ENCODE measurements at regions of chr19 and their contacts with region 1.

Region 1: DNA sequence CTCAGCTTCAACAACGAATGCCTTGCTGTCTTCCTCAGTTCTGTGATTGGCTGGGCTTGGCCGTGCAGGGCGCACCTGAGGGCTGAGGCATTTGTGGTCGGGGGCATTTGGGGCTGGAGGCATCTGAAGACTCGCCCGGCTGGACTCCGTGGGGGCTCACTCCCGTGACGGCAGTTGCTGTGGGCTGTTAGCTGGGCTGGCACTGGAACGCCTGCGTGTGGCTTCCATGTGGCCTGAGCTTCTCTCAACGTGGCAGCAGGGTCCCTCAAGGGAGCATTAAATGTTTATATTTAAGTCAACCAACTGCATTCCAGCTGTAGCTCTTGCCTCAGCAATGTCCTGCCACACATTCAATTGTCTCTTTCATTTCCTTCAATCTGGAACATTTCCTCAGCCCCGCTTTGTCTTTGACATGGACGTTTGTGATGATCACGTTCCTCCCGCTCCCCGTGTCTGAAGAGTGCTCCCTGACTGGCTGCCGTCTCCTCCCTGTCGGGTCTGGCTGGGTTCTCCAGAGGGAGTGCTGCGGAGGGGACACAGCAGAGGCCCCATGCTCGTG is 21.0 kb downstream of the CCDC8 start:
- DNase-seq: peak; percentile 58 to 80
- ATAC-seq: peak; percentile 4
- H3K4me3 ChIP-seq: no peak overlapping the region
- H3K27ac ChIP-seq: no peak overlapping the region
- H3K4me1 ChIP-seq: no peaks in the 10 kb centered on the region
- H3K27me3 ChIP-seq: no peaks in the 10 kb centered on the region

Region 2: GRCh38 chr19:46319613-46320012 is 72.7 kb before region 1 on chr19:
- intact Hi-C with region 1: no loop called
- DNase-seq: no peak
- ATAC-seq: peak; percentile 62
- H3K4me3 ChIP-seq: no peak overlapping the region
- H3K27ac ChIP-seq: peak overlapping the region in 1 of 2 donors; percentile 59
- H3K4me1 ChIP-seq: no peaks in the 10 kb centered on the region
- H3K27me3 ChIP-seq: no peaks in the 10 kb centered on the region

Region 3: DNA sequence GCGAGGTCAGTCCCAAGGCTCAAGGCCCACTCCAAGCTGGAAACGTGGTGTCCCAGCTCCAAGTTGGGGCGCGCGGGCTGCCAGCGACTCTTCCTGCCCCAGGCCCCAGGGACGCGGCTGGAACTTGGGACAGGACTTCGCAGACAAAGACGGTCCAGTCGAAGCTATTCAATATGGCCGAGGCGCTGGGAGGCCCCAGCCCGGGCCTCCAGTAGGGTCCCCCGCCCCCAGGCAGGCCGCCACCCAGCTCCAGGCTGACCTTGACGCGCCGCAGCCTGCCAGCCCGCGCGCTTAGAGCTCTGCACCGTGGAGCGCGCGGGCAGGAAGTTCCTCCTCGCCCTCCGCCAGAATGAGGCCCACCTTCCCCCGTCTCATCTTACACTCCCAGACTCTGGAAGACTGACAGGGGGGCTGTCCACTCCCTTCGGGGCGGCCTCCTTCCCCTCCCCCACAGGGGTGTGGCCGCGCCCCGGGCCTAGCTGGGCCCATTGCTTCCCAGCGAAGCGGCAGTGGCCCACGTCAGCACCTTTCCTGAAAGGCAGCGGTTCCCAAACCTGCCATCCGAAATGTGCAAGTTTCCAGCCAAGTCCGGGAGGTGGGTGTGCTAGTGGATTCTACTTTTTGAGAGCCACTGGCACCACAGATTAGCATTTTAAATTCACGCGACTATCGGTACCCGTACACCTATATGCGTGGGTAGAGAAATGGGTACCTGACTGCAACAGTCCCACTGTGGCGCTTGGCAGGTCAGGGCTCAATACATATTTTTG is 21.1 kb after region 1 on chr19 and contains the start of gene CCDC8:
- intact Hi-C with region 1: no loop called
- DNase-seq: peak; percentile 91 to 92
- ATAC-seq: peak; percentile 90
- H3K4me3 ChIP-seq: peak within 1 kb of the TSS; percentile 43
- H3K27ac ChIP-seq: peak within 1 kb of the TSS; percentile 29 to 32
- H3K4me1 ChIP-seq: no peaks in the 10 kb centered on the region
- H3K27me3 ChIP-seq: no peaks in the 10 kb centered on the region
- total RNA-seq, gene CCDC8: 18.8 to 25.7 TPM

Region 4: DNA sequence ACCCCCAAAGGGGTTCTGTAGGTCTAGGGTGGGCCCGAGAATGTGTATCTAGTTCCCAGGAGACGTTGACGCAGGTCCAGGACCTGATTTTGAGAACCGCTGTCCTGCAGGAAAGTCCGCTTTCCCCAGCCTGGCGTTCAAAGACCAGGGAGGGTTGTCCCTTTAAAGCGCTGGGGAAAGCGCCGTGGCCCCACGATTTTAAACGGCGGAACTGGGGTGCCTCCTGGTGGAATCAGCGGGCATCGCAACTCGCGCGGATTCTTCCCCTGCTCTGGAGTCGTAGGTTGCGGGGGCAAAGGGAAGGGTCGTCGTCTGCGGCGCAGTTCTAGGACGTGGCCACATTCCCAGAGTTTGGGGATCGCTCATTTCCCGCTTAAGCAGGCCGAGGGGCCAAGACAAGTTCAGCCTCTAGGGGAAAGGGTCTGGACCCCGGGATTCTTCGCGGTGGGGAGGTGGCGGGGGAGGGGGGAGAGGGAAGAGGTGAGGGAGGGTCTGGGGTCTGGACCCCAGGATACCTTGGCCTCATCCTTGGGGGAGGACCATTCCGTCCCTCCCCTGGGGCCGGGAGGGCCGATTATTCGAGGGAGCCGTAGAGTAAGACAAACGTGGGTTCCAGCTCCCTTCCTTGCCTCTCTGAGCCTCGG is 95.6 kb after region 1 on chr19:
- intact Hi-C with region 1: loop called (anchors 1 to 2 kb)
- DNase-seq: peak; percentile 83 to 95
- ATAC-seq: peak; percentile 88
- H3K4me3 ChIP-seq: peak overlapping the region; percentile 2 to 20
- H3K27ac ChIP-seq: no peak overlapping the region
- H3K4me1 ChIP-seq: no peaks in the 10 kb centered on the region
- H3K27me3 ChIP-seq: no peaks in the 10 kb centered on the region

Measured in aorta (tissue), 5 donors.